CD8-positive, alpha-beta memory T cell (primary cell): ENCODE measurements at regions of chr20 and their contacts with region 1.

Region 1: DNA sequence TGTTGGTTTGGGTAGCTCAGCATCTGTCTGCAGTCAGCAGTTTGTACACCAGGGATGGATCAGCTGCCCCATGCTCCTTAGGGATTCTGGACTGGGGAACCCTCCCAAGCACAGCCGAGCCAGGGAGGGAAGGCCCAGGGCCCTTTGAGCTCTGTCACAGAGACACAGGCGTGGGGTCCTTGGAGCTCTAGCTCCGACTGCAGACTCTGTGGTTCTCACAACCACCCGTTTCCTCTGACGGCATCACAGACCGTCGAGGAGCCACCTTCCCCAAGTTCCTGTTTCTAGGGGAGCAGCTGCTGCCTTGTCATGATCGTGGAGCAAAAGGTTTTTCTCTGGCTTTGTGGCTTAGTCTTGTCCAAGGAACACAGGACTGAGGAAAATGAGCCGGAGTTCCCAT is at the start of gene SLA2:
- DNase-seq: peak; percentile 54 to 82 (median 75)
- H3K4me3 ChIP-seq: peak within 1 kb of the TSS; percentile 91
- H3K4me3 Mint-ChIP-seq: peak within 1 kb of the TSS; percentile 94 to 99 (median 97)
- H3K27ac ChIP-seq: peak within 1 kb of the TSS; percentile 71
- H3K27ac Mint-ChIP-seq: peak within 1 kb of the TSS; percentile 95 to 99 (median 98)
- H3K4me1 ChIP-seq: peaks cover 44% of the 10 kb centered on the region
- H3K4me1 Mint-ChIP-seq: peaks cover 50 to 61% (median 61%) of the 10 kb centered on the region in 3 donors
- H3K27me3 ChIP-seq: no peaks in the 10 kb centered on the region
- H3K27me3 Mint-ChIP-seq: no peaks in the 10 kb centered on the region
- total RNA-seq, gene SLA2: 47.8 to 51.2 TPM

Region 2: GRCh38 chr20:36493013-36493800 is 152.8 kb before region 1 on chr20:
- CTCF ChIA-PET with region 1: interaction called, 4 read pairs
- POLR2A ChIA-PET with region 1: interaction called, 10 read pairs
- DNase-seq: no peak
- H3K4me3 ChIP-seq: no peak overlapping the region
- H3K4me3 Mint-ChIP-seq: peak overlapping the region in 1 of 7 donors; percentile 28
- H3K27ac ChIP-seq: no peak overlapping the region
- H3K27ac Mint-ChIP-seq: peak overlapping the region; percentile 29 to 98 (median 89)
- H3K4me1 ChIP-seq: peaks cover 26% of the 10 kb centered on the region
- H3K4me1 Mint-ChIP-seq: peaks cover 43 to 54% (median 43%) of the 10 kb centered on the region in 3 donors
- H3K27me3 ChIP-seq: no peaks in the 10 kb centered on the region
- H3K27me3 Mint-ChIP-seq: no peaks in the 10 kb centered on the region

Region 3: GRCh38 chr20:36573103-36573794 is 72.7 kb before region 1 on chr20 and contains the start of gene TGIF2:
- CTCF ChIA-PET with region 1: no interaction called
- POLR2A ChIA-PET with region 1: interaction called, 10 read pairs
- DNase-seq: peak; percentile 85 to 96 (median 93)
- H3K4me3 ChIP-seq: peak within 1 kb of the TSS; percentile 66
- H3K4me3 Mint-ChIP-seq: peak within 1 kb of the TSS; percentile 90 to 96 (median 93)
- H3K27ac ChIP-seq: peak within 1 kb of the TSS; percentile 91
- H3K27ac Mint-ChIP-seq: peak within 1 kb of the TSS; percentile 97 to 100 (median 98)
- H3K4me1 ChIP-seq: peaks cover 33% of the 10 kb centered on the region
- H3K4me1 Mint-ChIP-seq: peaks cover 30 to 40% (median 37%) of the 10 kb centered on the region in 3 donors
- H3K27me3 ChIP-seq: no peaks in the 10 kb centered on the region
- H3K27me3 Mint-ChIP-seq: peaks cover 0 to 3% of the 10 kb centered on the region in 2 donors
- total RNA-seq, gene TGIF2: 46.1 to 49.8 TPM

Region 4: DNA sequence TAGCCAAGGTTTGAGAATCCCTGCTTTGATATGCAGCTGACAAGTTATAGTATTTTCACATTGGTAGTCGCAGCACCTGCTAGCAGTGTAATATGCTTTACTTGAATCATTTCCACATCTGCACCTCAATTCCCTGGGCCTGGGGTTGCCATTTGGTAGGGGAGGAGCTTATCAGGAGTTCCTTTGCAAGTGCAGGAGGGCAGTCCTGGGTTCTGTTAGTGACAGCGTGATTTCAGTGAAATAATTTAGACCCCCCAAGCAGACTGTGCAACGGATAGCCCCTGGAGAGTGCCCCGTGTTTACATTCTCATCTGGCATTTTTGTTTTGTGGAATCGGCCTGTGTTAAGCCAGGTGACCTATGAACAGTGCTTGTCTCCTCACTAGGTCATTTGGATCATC is 34.4 kb before region 1 on chr20:
- CTCF ChIA-PET with region 1: interaction called, 30 read pairs
- POLR2A ChIA-PET with region 1: interaction called, 14 read pairs
- DNase-seq: no peak
- H3K4me3 ChIP-seq: no peak overlapping the region
- H3K4me3 Mint-ChIP-seq: no peak overlapping the region
- H3K27ac ChIP-seq: no peak overlapping the region
- H3K27ac Mint-ChIP-seq: peak overlapping the region in 3 of 8 donors; percentile 23 to 75 (median 50)
- H3K4me1 ChIP-seq: peaks cover 17% of the 10 kb centered on the region
- H3K4me1 Mint-ChIP-seq: peaks cover 21 to 62% (median 25%) of the 10 kb centered on the region in 3 donors
- H3K27me3 ChIP-seq: no peaks in the 10 kb centered on the region
- H3K27me3 Mint-ChIP-seq: peaks cover 0 to 2% of the 10 kb centered on the region in 2 donors

Region 5: DNA sequence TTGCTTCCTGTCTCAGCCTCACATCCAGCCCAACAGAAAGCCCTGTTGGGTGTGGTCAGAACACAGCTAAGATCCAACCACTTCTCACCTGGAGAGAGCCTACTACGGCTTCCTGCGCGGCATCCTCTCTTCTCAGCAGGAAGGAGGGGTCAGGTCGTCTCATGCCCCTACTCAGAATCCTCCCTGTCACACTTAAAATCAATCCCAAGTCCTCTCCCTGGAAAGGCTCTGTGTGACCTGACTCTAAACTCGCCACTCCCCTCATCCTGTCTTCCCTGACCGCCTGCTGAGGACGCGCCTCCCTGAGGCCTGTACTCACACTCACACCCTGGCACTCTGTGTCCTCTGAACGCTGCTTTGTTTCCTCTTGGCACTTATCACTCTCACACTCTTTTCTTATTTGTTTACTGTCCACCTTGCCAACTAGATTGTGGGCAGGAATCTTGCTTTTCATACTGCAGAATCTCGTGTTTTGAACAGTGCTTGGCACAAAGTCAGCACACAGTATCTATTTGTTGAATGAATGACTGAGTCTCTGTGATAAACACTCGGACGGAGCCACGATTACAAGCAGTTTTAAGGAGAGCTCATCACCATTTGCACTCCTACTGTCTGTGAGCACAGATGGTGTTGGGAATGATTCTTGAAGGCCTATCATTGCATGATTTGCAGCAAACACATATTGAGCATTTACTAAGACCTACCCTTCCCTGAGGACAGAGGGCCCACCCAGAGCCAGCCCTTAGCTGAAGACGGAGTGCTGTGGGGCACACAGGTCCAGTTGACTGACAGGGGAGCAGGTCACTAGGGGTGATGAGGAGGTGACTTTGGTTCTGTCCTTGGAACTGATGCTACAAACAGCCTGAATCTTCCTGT is 21.7 kb before region 1 on chr20:
- CTCF ChIA-PET with region 1: interaction called, 16 read pairs
- POLR2A ChIA-PET with region 1: interaction called, 16 read pairs
- DNase-seq: no peak
- H3K4me3 ChIP-seq: no peak overlapping the region
- H3K4me3 Mint-ChIP-seq: peak overlapping the region in 1 of 7 donors; percentile 68
- H3K27ac ChIP-seq: no peak overlapping the region
- H3K27ac Mint-ChIP-seq: peak overlapping the region; percentile 26 to 90 (median 84)
- H3K4me1 ChIP-seq: peaks cover 33% of the 10 kb centered on the region
- H3K4me1 Mint-ChIP-seq: peaks cover 43 to 66% (median 50%) of the 10 kb centered on the region in 3 donors
- H3K27me3 ChIP-seq: no peaks in the 10 kb centered on the region
- H3K27me3 Mint-ChIP-seq: no peaks in the 10 kb centered on the region

Region 6: DNA sequence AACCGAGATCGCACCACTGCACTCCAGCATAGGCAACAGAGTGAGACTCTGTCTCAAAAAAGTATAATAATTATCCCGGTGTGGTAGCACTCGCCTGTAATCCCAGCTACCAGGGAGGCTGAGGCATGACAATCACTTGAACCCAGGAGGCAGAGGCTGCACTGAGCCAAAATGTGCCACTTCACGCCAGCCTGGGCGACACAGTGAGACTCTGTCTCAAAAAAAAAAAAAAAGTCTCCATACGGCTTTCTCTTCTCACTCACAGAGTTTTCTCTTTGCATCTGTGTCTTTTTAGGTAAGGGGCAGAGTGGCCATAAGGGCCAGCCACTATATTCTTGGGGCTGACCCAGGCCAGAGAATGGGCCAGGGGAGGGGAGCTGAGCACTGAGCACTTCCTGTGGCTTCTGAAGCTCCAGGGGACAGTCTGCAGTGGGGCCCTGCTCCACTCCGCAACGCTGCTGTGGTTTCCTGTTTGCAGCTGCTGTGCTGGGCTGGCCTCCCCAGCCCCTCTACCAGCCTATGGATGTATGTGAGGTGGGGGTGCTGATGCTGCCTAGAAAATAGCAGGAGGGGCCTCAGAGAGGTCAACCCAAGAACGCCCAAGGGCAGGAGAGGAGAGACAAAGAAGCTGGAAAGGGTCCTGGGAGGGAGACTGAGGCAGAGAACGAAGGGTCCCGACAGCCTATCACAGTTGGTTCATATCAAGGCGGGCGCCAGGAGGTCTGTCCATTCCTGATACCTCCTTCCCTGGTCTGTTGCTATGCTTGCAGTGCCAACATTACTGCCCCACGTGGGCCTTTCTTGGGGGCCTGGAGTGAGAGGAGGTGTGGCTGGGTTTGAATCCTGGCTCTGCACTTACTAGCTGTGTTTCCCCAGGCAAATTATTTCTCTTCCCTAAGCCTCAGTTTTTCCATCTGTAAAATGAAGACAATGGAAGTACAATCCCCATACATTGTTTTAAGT is 16.0 kb before region 1 on chr20:
- CTCF ChIA-PET with region 1: interaction called, 16 read pairs
- POLR2A ChIA-PET with region 1: interaction called, 16 read pairs
- DNase-seq: peak in 4 of 5 donors; percentile 31 to 75 (median 52)
- H3K4me3 ChIP-seq: peak overlapping the region; percentile 28
- H3K4me3 Mint-ChIP-seq: peak overlapping the region; percentile 43 to 87 (median 82)
- H3K27ac ChIP-seq: peak overlapping the region; percentile 25
- H3K27ac Mint-ChIP-seq: peak overlapping the region; percentile 97 to 98 (median 97)
- H3K4me1 ChIP-seq: peaks cover 39% of the 10 kb centered on the region
- H3K4me1 Mint-ChIP-seq: peaks cover 47 to 76% (median 56%) of the 10 kb centered on the region in 3 donors
- H3K27me3 ChIP-seq: no peaks in the 10 kb centered on the region
- H3K27me3 Mint-ChIP-seq: no peaks in the 10 kb centered on the region